T-cell (primary cell): ENCODE measurements at regions of chr21 and their contacts with region 1.

Region 1: GRCh38 chr21:39232861-39233291 is 49.6 kb upstream of the PSMG1 start:
- DNase-seq: no peak
- ATAC-seq: no peak
- H3K4me3 ChIP-seq: no peak overlapping the region
- H3K4me3 Mint-ChIP-seq: no peak overlapping the region
- H3K27ac ChIP-seq: no peak overlapping the region
- H3K27ac Mint-ChIP-seq: peak overlapping the region in 1 of 2 donors; percentile 22
- H3K4me1 ChIP-seq: no peaks in the 10 kb centered on the region
- H3K4me1 Mint-ChIP-seq: peaks cover 11 to 14% (median 13%) of the 10 kb centered on the region in 3 donors
- H3K27me3 ChIP-seq: no peaks in the 10 kb centered on the region
- H3K27me3 Mint-ChIP-seq: no peaks in the 10 kb centered on the region

Region 2: GRCh38 chr21:37454869-37455503 is 1777.9 kb before region 1 on chr21:
- CTCF ChIA-PET with region 1: no interaction called
- POLR2A ChIA-PET with region 1: interaction called in 1 of 2 experiments, 17 read pairs
- DNase-seq: no peak
- ATAC-seq: no peak
- H3K4me3 ChIP-seq: no peak overlapping the region
- H3K4me3 Mint-ChIP-seq: peak overlapping the region in 2 of 3 donors; percentile 7 to 52
- H3K27ac ChIP-seq: no peak overlapping the region
- H3K27ac Mint-ChIP-seq: peak overlapping the region; percentile 77 to 78
- H3K4me1 ChIP-seq: peaks cover 25 to 55% of the 10 kb centered on the region in 2 experiments
- H3K4me1 Mint-ChIP-seq: peaks cover 90 to 95% (median 90%) of the 10 kb centered on the region in 3 donors
- H3K27me3 ChIP-seq: no peaks in the 10 kb centered on the region
- H3K27me3 Mint-ChIP-seq: no peaks in the 10 kb centered on the region

Region 3: GRCh38 chr21:39349211-39350093 is 116.6 kb after region 1 on chr21:
- CTCF ChIA-PET with region 1: no interaction called
- POLR2A ChIA-PET with region 1: no interaction called
- DNase-seq: peak; percentile 92 to 98 (median 96)
- ATAC-seq: peak; percentile 85 to 87 (median 86)
- H3K4me3 ChIP-seq: peak overlapping the region; percentile 68 to 99
- H3K4me3 Mint-ChIP-seq: peak overlapping the region; percentile 84 to 96 (median 94)
- H3K27ac ChIP-seq: peak overlapping the region; percentile 69
- H3K27ac Mint-ChIP-seq: peak overlapping the region; percentile 98
- H3K4me1 ChIP-seq: peaks cover 12 to 22% of the 10 kb centered on the region in 2 experiments
- H3K4me1 Mint-ChIP-seq: peaks cover 38 to 45% (median 40%) of the 10 kb centered on the region in 3 donors
- H3K27me3 ChIP-seq: no peaks in the 10 kb centered on the region
- H3K27me3 Mint-ChIP-seq: peaks cover 0 to 2% of the 10 kb centered on the region in 2 donors

Region 4: GRCh38 chr21:39601187-39601928 is 368.5 kb after region 1 on chr21:
- CTCF ChIA-PET with region 1: no interaction called
- POLR2A ChIA-PET with region 1: no interaction called
- DNase-seq: no peak
- ATAC-seq: no peak
- H3K4me3 ChIP-seq: no peak overlapping the region
- H3K4me3 Mint-ChIP-seq: no peak overlapping the region
- H3K27ac ChIP-seq: no peak overlapping the region
- H3K27ac Mint-ChIP-seq: no peak overlapping the region
- H3K4me1 ChIP-seq: no peaks in the 10 kb centered on the region
- H3K4me1 Mint-ChIP-seq: no peaks in the 10 kb centered on the region
- H3K27me3 ChIP-seq: peaks cover 0 to 10% of the 10 kb centered on the region in 2 experiments
- H3K27me3 Mint-ChIP-seq: peaks cover 3 to 5% of the 10 kb centered on the region in 2 donors